Esophagus muscularis mucosa (tissue), 4 donors: ENCODE measurements at regions of chr5 and their contacts with region 1.

Region 1: DNA sequence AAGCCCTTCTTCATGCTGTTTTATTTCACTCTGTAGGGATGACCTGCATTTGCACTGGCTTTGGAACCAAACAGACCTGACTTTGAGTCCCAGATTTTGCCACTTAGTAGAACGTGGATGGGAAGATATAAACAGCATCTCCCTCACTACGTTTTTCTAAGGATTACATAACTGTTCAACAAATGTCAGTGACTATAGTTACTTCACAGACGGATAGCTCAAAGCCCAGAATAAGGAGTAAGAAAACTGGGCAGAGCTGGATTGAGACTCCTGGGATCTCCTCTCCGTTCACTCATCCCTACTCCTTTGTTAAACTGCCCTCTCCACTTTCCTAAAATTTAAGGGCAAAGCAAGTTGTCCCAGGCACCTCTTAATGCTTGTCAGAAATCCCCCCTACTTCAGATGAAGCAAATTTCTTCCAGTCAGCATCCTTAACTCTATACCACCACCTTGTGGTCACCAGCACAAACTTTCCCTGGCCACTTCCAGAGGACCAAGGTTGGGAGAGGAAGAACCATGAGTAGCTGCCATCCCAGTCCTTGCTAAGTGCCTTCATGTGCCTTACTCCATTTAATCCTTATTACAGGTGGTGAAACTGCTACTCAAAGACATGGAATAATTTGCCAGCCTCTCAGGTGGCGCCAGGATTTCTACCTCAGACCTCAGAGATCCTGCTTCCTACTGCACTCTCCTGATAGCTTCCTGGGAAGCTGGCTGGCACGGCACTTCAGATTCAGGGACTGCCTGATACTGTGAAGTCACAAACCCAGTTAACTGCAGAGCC is 38.4 kb downstream of the EGR1 start:
- DNase-seq: no peak
- H3K4me3 ChIP-seq: no peak overlapping the region
- H3K27ac ChIP-seq: peak overlapping the region; percentile 55 to 72 (median 61)
- H3K4me1 ChIP-seq: peaks cover 18 to 39% (median 39%) of the 10 kb centered on the region in 4 donors
- H3K27me3 ChIP-seq: no peaks in the 10 kb centered on the region
- CTCF ChIP-seq: peak; percentile 77 to 85 (median 82)
- EP300 ChIP-seq: no peak
- POLR2A ChIP-seq: no peak

Region 2: GRCh38 chr5:138449501-138450239 is 54.0 kb before region 1 on chr5:
- intact Hi-C with region 1: loop called (anchors 1 kb)
- DNase-seq: peak; percentile 96
- H3K4me3 ChIP-seq: peak overlapping the region in 3 of 4 donors; percentile 7 to 30 (median 15)
- H3K27ac ChIP-seq: peak overlapping the region in 3 of 4 donors; percentile 9 to 64 (median 50)
- H3K4me1 ChIP-seq: peaks cover 9 to 18% (median 14%) of the 10 kb centered on the region in 4 donors
- H3K27me3 ChIP-seq: no peaks in the 10 kb centered on the region
- CTCF ChIP-seq: peak; percentile 90 to 97 (median 96)
- EP300 ChIP-seq: no peak
- POLR2A ChIP-seq: no peak

Region 3: GRCh38 chr5:138463419-138464007 is 40.2 kb before region 1 on chr5:
- intact Hi-C with region 1: loop called (anchors 2 kb)
- DNase-seq: no peak
- H3K4me3 ChIP-seq: peak overlapping the region; percentile 67 to 98 (median 74)
- H3K27ac ChIP-seq: peak overlapping the region; percentile 96 to 99 (median 98)
- H3K4me1 ChIP-seq: peaks cover 37 to 64% (median 46%) of the 10 kb centered on the region in 4 donors
- H3K27me3 ChIP-seq: no peaks in the 10 kb centered on the region
- CTCF ChIP-seq: peak in 1 of 3 experiments; percentile 6
- EP300 ChIP-seq: no peak
- POLR2A ChIP-seq: no peak

Region 4: DNA sequence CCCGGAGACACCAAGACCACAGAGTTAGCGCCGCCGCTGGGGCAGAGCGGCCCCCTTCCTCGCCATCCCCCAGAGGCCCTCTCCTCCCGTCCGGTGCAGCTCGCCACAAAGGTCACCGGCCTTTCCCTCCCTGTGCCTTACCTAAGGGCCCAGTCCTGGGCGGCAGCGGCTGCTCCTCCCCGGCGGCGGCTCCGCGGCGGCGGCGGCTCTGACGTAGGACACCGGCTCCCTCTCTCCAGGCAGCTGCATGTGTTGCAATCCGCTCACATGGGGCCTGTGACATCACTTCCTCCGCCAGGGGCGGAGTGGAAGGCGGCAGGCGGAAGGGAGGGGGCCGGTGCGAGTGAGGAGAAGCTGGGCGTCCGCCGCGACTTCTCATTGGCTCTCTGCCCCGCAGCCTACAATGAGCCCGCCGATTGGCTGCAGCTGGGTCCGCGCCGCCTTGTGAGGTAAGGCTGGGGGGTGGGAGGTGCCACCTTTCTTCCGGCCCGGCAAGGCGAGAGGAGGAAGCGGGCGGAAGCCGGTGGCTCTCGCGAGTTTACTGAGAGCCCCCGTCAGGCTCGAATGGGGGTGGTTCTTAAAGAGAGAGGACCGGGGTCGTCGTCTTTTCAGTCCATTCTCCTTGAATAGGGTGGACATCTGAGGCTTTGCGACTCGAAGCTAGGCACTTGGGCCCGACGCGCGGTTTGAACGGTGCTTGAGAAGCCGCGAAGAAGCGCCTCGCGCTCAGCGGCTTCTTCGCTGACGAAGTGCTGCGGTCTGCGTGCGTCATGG is 39.5 kb after region 1 on chr5 and contains the start of gene ETF1:
- intact Hi-C with region 1: loop called (anchors 5 kb)
- DNase-seq: peak; percentile 100
- H3K4me3 ChIP-seq: peak within 1 kb of the TSS; percentile 75 to 100 (median 84)
- H3K27ac ChIP-seq: peak within 1 kb of the TSS; percentile 92 to 100 (median 98)
- H3K4me1 ChIP-seq: peaks cover 67 to 79% (median 77%) of the 10 kb centered on the region in 4 donors
- H3K27me3 ChIP-seq: no peaks in the 10 kb centered on the region
- CTCF ChIP-seq: no peak
- EP300 ChIP-seq: no peak
- POLR2A ChIP-seq: peak; percentile 100
- total RNA-seq, gene ETF1: 90.5 to 154 (median 111) TPM